Mammary epithelial cell (primary cell): ENCODE measurements at regions of chr4 and their contacts with region 1.

Region 1: GRCh38 chr4:165464813-165465381 is 86.1 kb downstream of the CPE start:
- DNase-seq: no peak
- H3K4me3 ChIP-seq: peak overlapping the region in 1 of 3 experiments; percentile 21
- H3K27ac ChIP-seq: no peak overlapping the region
- H3K4me1 ChIP-seq: peaks cover 8% of the 10 kb centered on the region
- H3K27me3 ChIP-seq: no peaks in the 10 kb centered on the region
- CTCF ChIP-seq: peak; percentile 71 to 76

Region 2: GRCh38 chr4:165009493-165010227 is 455.2 kb before region 1 on chr4:
- CTCF ChIA-PET with region 1: no interaction called
- dilution Hi-C with region 1: no loop called
- in situ Hi-C with region 1: no loop called
- intact Hi-C with region 1: no loop called
- DNase-seq: no peak
- H3K4me3 ChIP-seq: no peak overlapping the region
- H3K27ac ChIP-seq: no peak overlapping the region
- H3K4me1 ChIP-seq: no peaks in the 10 kb centered on the region
- H3K27me3 ChIP-seq: no peaks in the 10 kb centered on the region
- CTCF ChIP-seq: no peak

Region 3: GRCh38 chr4:165343353-165344191 is 121.3 kb before region 1 on chr4:
- CTCF ChIA-PET with region 1: no interaction called
- dilution Hi-C with region 1: loop called (anchors 5 kb)
- in situ Hi-C with region 1: loop called in 1 of 2 experiments (anchors 25 kb)
- intact Hi-C with region 1: no loop called
- DNase-seq: no peak
- H3K4me3 ChIP-seq: no peak overlapping the region
- H3K27ac ChIP-seq: no peak overlapping the region
- H3K4me1 ChIP-seq: no peaks in the 10 kb centered on the region
- H3K27me3 ChIP-seq: no peaks in the 10 kb centered on the region
- CTCF ChIP-seq: peak in 1 of 2 donors; percentile 25

Region 4: GRCh38 chr4:165355900-165356300 is 109.0 kb before region 1 on chr4:
- CTCF ChIA-PET with region 1: no interaction called
- dilution Hi-C with region 1: no loop called
- in situ Hi-C with region 1: loop called in 1 of 2 experiments (anchors 5 kb)
- intact Hi-C with region 1: loop called (anchors 1 kb)
- DNase-seq: no peak
- H3K4me3 ChIP-seq: no peak overlapping the region
- H3K27ac ChIP-seq: no peak overlapping the region
- H3K4me1 ChIP-seq: peaks cover 18% of the 10 kb centered on the region
- H3K27me3 ChIP-seq: no peaks in the 10 kb centered on the region
- CTCF ChIP-seq: peak; percentile 41 to 70

Region 5: GRCh38 chr4:165378745-165379677 is 85.9 kb before region 1 on chr4 and contains the start of gene CPE:
- CTCF ChIA-PET with region 1: interaction called, 14 read pairs
- dilution Hi-C with region 1: no loop called
- in situ Hi-C with region 1: no loop called
- intact Hi-C with region 1: loop called (anchors 2 kb)
- DNase-seq: peak; percentile 78
- H3K4me3 ChIP-seq: peak within 1 kb of the TSS; percentile 47 to 54 (median 54)
- H3K27ac ChIP-seq: no peak within 1 kb of the TSS
- H3K4me1 ChIP-seq: peaks cover 13% of the 10 kb centered on the region
- H3K27me3 ChIP-seq: no peaks in the 10 kb centered on the region
- CTCF ChIP-seq: peak; percentile 41 to 71
- total RNA-seq, gene CPE: 10.0 to 19.8 TPM